SK-N-SH (cell line): ENCODE measurements at regions of chr10 and their contacts with region 1.

Region 1: DNA sequence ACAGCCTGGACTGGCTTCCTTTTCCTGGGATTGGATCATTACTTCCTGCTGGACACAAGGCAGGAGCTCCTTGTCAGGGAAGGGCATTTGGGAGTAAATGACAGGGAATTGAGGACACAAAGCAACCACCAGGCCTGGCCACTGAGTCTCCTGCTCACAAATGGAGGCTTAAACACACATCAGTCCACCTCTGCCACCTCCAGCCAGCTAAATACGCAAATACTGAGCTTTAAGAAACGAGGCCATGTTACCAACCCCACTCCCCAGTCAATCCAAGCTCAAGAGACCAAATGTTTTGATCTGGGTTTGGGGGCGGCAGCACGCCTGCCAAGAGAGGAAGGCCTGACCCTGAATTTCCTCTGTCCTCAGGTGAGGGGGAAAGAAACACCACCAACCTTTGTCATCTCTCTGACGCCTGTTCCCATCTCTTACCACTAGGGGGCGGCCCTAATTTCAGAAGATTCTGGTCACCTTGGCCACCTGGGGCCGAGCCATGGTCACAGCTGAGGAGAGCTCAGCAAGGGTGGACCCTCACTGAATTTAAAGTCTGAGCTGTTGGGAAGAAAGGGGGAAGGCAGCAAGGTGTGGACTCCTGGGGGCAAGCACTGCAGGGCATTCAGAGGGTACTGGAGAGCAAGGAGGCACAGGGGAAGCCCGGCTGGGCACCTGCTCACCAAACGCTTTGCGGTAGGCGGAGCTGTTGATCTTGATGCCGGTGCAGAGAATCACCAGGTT is 16.5 kb downstream of the AIFM2 start:
- DNase-seq: peak; percentile 80
- H3K4me3 ChIP-seq: no peak overlapping the region
- H3K27ac ChIP-seq: no peak overlapping the region
- H3K4me1 ChIP-seq: peaks cover 0 to 3% of the 10 kb centered on the region in 2 experiments; a peak in 1 of 4 replicates
- H3K27me3 ChIP-seq: no peaks in the 10 kb centered on the region
- CTCF ChIP-seq: peak; percentile 93
- EP300 ChIP-seq: no peak
- RAD21 ChIP-seq: peak; percentile 51

Region 2: DNA sequence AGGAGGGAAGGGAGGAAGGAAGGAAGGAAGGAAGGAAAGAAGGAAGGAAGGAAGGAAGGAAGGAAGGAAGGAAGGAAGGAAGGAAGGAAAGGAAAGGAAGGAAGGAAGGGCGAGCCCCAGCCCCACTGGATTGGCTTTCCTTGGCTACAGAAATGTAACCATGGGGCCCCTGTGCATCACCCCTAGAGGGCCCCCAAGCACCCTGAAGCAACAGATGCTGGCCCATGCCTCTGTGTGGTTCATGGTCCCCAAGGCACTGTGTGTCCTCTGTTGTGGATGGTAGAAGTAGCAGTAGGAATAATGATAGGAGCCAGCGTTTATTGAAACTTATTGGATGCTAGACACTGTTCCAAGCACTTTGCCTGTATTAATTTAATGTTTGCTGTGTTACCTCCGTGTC is 180.0 kb before region 1 on chr10:
- CTCF ChIA-PET with region 1: interaction called, 11 read pairs
- POLR2A ChIA-PET with region 1: no interaction called
- DNase-seq: no peak
- H3K4me3 ChIP-seq: no peak overlapping the region
- H3K27ac ChIP-seq: no peak overlapping the region
- H3K4me1 ChIP-seq: no peaks in the 10 kb centered on the region
- H3K27me3 ChIP-seq: no peaks in the 10 kb centered on the region
- CTCF ChIP-seq: no peak
- EP300 ChIP-seq: no peak
- RAD21 ChIP-seq: peak; percentile 23

Region 3: GRCh38 chr10:69968830-69969229 is 147.3 kb before region 1 on chr10:
- CTCF ChIA-PET with region 1: interaction called, 16 read pairs
- POLR2A ChIA-PET with region 1: no interaction called
- DNase-seq: peak; percentile 45
- H3K4me3 ChIP-seq: no peak overlapping the region
- H3K27ac ChIP-seq: no peak overlapping the region
- H3K4me1 ChIP-seq: peaks cover 7 to 19% of the 10 kb centered on the region in 2 experiments
- H3K27me3 ChIP-seq: no peaks in the 10 kb centered on the region
- CTCF ChIP-seq: peak; percentile 40
- EP300 ChIP-seq: no peak
- RAD21 ChIP-seq: peak; percentile 87

Region 4: GRCh38 chr10:69974551-69975155 is 141.5 kb before region 1 on chr10:
- CTCF ChIA-PET with region 1: interaction called, 16 read pairs
- POLR2A ChIA-PET with region 1: no interaction called
- DNase-seq: peak; percentile 73
- H3K4me3 ChIP-seq: no peak overlapping the region
- H3K27ac ChIP-seq: peak overlapping the region; percentile 59 to 79
- H3K4me1 ChIP-seq: peaks cover 15 to 21% of the 10 kb centered on the region in 2 experiments; a peak in 3 of 4 replicates
- H3K27me3 ChIP-seq: no peaks in the 10 kb centered on the region
- CTCF ChIP-seq: no peak
- EP300 ChIP-seq: peak in 1 of 2 experiments; percentile 90; a peak in 3 of 4 replicates
- RAD21 ChIP-seq: peak; percentile 35

Region 5: DNA sequence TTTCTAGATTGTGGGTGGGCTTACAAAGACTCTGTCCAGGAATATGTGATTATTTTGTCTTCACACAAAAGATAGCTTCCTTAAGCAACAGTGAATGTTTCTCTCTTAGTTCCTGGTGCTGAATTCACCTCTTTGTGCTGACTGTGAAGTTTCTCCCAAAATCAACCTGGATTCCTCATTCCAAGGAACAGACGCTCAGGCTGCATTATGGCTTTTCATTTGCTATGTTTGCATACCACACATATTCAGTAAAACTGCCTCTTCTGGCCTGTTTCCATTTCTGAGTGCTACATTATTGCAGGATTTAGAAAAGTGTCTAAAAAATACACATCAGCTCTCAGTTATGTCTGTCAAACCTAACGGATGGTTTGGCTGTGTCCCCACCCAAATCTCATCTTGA is 42.0 kb before region 1 on chr10:
- CTCF ChIA-PET with region 1: interaction called, 15 read pairs
- POLR2A ChIA-PET with region 1: no interaction called
- DNase-seq: no peak
- H3K4me3 ChIP-seq: no peak overlapping the region
- H3K27ac ChIP-seq: no peak overlapping the region
- H3K4me1 ChIP-seq: peaks cover 0 to 4% of the 10 kb centered on the region in 2 experiments; a peak in 1 of 4 replicates
- H3K27me3 ChIP-seq: no peaks in the 10 kb centered on the region
- CTCF ChIP-seq: no peak
- EP300 ChIP-seq: no peak
- RAD21 ChIP-seq: no peak

Region 6: DNA sequence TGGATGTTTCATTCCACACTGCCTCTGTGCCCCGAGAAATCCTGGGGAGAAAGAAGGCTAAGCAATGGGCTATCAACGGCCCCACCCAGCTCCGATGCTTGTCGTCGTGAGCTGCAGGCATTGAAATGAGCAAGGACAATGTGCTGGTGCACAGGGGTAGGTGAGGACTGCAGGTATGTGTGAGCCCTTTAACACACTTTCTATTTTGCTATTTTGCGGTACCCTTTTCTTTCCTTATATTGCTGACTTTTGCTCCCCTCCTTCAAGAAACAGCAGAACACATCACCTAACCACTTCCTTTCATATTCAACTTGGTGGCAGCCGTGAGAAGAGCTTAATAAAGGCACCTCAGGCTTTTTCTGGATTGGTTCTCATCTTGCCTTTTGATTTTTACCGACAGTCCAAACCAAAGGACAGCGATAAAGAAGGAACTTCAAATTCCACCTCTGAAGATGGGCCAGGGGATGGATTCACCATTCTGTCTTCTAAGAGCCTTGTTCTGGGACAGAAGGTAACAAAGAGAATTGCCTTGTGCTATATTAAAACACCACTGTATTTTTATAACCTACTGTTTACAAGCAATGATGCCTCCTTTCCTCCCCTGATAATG is 22.7 kb before region 1 on chr10:
- CTCF ChIA-PET with region 1: interaction called, 184 read pairs
- POLR2A ChIA-PET with region 1: interaction called, 3 read pairs
- DNase-seq: no peak
- H3K4me3 ChIP-seq: no peak overlapping the region
- H3K27ac ChIP-seq: no peak overlapping the region
- H3K4me1 ChIP-seq: no peaks in the 10 kb centered on the region
- H3K27me3 ChIP-seq: no peaks in the 10 kb centered on the region
- CTCF ChIP-seq: no peak
- EP300 ChIP-seq: no peak
- RAD21 ChIP-seq: no peak

Region 7: GRCh38 chr10:70132098-70133029 is 16.2 kb after region 1 on chr10 and contains the start of gene AIFM2:
- CTCF ChIA-PET with region 1: interaction called, 157 read pairs
- POLR2A ChIA-PET with region 1: no interaction called
- DNase-seq: peak; percentile 87
- H3K4me3 ChIP-seq: peak within 1 kb of the TSS; percentile 45 to 58
- H3K27ac ChIP-seq: 0 out of 4 replicates have a peak within 1 kb of the TSS, but pooled peaks of 1 of the 2 experiments have one; percentile 11
- H3K4me1 ChIP-seq: peaks cover 0 to 3% of the 10 kb centered on the region in 2 experiments; a peak in 1 of 4 replicates
- H3K27me3 ChIP-seq: no peaks in the 10 kb centered on the region
- CTCF ChIP-seq: no peak
- EP300 ChIP-seq: no peak
- RAD21 ChIP-seq: no peak
- polyA plus RNA-seq, gene AIFM2: 9.4 and 9.5 TPM in 2 replicates